Activated CD4-positive, alpha-beta memory T cell treated with anti-CD3 and anti-CD28 coated beads for 36 hours (primary cell): ENCODE measurements at regions of chr2 and their contacts with region 1.

Region 1: DNA sequence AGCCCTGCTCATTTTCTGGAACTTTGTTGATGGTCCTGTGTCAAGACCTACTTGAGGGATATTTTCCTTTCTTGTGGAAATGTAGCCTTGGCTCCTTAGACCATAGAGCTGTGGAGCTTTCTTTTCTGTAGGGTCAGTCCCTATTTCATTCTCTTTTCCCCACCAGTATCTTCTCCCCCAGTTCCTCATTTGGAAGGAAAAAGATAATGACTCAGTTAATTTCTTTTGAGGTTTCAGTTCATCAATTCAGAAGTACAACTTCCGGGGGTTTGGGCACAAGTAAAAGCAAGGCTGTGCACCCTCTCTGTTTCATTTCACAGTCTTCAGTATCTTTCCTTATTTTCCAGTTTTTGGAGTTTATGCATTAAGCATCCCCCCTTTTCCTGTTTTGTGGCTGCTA is 70.7 kb downstream of the CDC42EP3 start:
- DNase-seq: no peak
- H3K4me3 Mint-ChIP-seq: peak overlapping the region; percentile 67
- H3K27ac Mint-ChIP-seq: peak overlapping the region; percentile 80
- H3K4me1 Mint-ChIP-seq: peaks cover 46% of the 10 kb centered on the region
- H3K27me3 Mint-ChIP-seq: no peaks in the 10 kb centered on the region

Region 2: GRCh38 chr2:37615804-37616676 is 15.3 kb after region 1 on chr2:
- CTCF ChIA-PET with region 1: interaction called, 15 read pairs
- POLR2A ChIA-PET with region 1: interaction called, 6 read pairs
- intact Hi-C with region 1: loop called (anchors 2 kb)
- DNase-seq: peak; percentile 72
- H3K4me3 Mint-ChIP-seq: no peak overlapping the region
- H3K27ac Mint-ChIP-seq: peak overlapping the region; percentile 77
- H3K4me1 Mint-ChIP-seq: peaks cover 63% of the 10 kb centered on the region
- H3K27me3 Mint-ChIP-seq: no peaks in the 10 kb centered on the region

Region 3: DNA sequence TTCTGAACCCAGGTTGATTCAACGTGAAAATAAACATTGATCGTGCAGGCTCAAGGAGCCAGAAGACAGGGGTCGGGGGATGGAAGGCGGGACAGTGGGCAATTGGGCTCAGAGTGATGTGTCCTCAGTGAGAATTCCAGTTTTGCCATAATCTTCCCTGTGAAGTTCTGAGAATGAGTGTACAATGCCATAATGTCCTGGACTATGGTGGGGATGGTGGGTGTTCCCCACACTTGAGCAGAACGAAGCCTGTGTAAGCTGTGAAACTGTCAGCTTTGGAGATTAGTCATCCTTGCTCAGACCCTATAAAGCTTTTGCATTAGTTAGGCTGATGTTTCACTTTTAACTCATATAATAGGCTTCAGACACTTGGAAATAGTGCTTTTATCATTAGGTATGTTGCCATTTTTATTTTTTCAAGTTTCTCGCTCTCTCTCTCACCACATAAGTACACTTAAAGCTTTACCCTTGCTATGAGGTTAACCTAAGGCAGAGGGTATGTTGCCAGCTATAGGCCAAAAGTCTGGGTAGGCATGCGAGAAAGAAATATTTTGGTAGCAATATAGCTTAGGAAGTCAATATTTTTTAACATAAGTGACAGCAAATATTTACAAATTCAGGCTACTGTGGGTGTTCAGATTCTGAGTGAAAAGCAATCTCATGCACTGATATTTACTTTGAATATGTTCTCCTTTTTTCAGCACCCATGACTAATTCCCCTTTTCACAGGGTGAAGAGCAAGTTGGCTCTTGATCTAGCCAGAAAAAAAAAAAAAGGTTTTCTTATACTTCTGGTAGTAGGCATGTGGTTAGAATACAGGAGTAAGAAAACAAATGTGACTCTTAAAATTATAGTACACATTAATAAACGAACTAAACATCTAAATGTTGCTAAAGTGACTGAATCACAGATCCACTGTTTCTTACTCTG is 23.5 kb after region 1 on chr2:
- CTCF ChIA-PET with region 1: interaction called, 15 read pairs
- POLR2A ChIA-PET with region 1: interaction called, 10 read pairs
- intact Hi-C with region 1: loop called (anchors 1 kb)
- DNase-seq: peak; percentile 50
- H3K4me3 Mint-ChIP-seq: peak overlapping the region; percentile 45
- H3K27ac Mint-ChIP-seq: peak overlapping the region; percentile 83
- H3K4me1 Mint-ChIP-seq: peaks cover 80% of the 10 kb centered on the region
- H3K27me3 Mint-ChIP-seq: no peaks in the 10 kb centered on the region